ENCODE measurements at regions of chr12 and their contacts with region 1.

Region 1: DNA sequence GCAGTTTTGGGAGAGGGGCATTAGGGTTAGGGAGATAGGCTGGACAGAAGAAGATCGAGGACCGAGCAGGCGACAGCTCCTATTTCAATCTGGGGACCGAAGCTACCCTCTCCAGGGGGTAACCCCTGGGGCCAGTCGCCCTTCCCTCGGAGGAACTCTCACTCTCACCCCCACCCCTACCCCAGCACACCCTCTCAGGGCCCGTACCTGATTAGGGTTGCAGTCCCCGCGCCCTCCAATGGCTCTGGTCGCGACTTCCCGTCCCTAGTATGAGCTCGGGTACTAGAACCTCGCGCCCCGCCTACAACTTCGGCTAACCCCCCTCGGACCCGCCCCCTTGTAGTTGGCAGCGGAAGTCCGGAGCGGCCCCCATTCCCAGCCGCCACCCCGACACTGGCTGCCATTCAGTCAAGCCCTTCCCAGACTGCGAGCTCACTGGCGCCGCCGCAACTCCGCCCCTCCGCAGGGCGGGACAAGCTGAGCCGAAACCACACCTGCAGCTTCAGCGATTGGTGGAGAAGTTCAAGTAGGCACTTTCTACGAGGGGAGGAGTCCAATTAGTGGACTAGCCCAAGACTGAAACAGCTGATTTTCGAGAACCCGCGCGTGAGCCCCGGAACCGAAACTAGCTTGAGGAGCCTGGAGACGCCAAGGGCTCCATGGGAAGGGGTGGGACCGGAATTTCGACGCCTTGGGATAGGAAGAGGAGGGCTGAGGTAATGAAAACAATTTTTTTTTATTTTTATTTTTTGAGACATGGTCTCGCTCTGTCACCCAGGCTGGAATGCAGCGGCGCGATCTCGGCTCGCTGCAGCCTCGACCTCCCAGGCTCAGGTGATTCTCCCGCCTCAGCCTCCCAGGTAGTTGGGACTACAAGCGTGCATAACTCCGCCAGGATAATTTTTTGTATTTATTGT is at the start of gene STAT2:
- DNase-seq: peak; percentile 95 to 99 (median 99)
- ATAC-seq: peak; percentile 95 to 98 (median 97)
- H3K4me3 ChIP-seq: peak within 1 kb of the TSS; percentile 47 to 82 (median 72)
- H3K27ac ChIP-seq: peak within 1 kb of the TSS; percentile 73 to 99 (median 96)
- H3K4me1 ChIP-seq: peaks cover 0 to 8% (median 6%) of the 10 kb centered on the region in 3 donors
- H3K27me3 ChIP-seq: no peaks in the 10 kb centered on the region
- CTCF ChIP-seq: no peak
- total RNA-seq, gene STAT2: 25.5 to 88.5 (median 38.4) TPM

Region 2: GRCh38 chr12:56431850-56432249 is 71.7 kb after region 1 on chr12:
- intact Hi-C with region 1: loop called in 1 of 3 experiments (anchors 10 kb)
- DNase-seq: no peak
- ATAC-seq: no peak
- H3K4me3 ChIP-seq: no peak overlapping the region
- H3K27ac ChIP-seq: no peak overlapping the region
- H3K4me1 ChIP-seq: no peaks in the 10 kb centered on the region
- H3K27me3 ChIP-seq: no peaks in the 10 kb centered on the region
- CTCF ChIP-seq: no peak

Measured in pancreas (tissue), 10 donors.